ENCODE measurements at regions of chr14 and their contacts with region 1.

Region 1: DNA sequence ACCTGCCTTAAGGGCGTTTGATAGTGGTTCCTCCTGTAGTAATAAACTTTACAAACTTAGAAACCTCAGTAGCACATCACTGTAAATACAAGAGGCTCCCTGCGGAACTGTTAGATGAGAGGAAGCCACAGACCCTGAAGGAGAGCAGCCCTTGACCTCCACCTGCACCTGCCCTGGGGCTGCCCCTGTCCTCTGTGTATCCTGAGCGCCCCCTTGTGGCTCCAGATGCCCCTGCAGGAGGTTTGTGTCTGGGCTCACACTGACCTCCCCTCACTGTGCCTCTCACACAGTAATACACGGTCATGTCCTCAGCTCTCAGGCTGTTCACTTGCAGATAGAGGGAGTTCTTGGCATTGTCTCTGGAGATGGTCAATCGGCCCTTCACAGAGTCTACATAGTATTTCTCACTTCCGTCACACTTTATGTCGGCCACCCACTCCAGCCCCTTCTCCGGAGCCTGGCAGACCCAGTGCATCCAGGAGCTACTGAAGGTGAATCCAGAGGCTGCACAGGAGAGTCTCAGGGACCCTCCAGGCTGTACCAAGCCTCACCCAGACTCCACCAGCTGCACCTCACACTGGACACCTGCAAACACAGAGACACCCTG is 1059.8 kb downstream of the TMEM121 start:
- DNase-seq: peak; percentile 26 to 77 (median 65)
- ATAC-seq: peak; percentile 75
- H3K4me3 ChIP-seq: no peak overlapping the region
- H3K4me3 Mint-ChIP-seq: no peak overlapping the region
- H3K27ac ChIP-seq: no peak overlapping the region
- H3K27ac Mint-ChIP-seq: no peak overlapping the region
- H3K4me1 ChIP-seq: no peaks in the 10 kb centered on the region
- H3K4me1 Mint-ChIP-seq: peaks cover 5% of the 10 kb centered on the region
- H3K27me3 ChIP-seq: peaks cover 0 to 3% of the 10 kb centered on the region in 2 experiments
- H3K27me3 Mint-ChIP-seq: peaks cover 20% of the 10 kb centered on the region
- CTCF ChIP-seq: peak; percentile 80

Region 2: GRCh38 chr14:106605548-106606448 is 19.6 kb after region 1 on chr14:
- CTCF ChIA-PET with region 1: interaction called, 16 read pairs
- POLR2A ChIA-PET with region 1: no interaction called
- intact Hi-C with region 1: no loop called
- DNase-seq: peak; percentile 59 to 87 (median 83)
- ATAC-seq: peak; percentile 100
- H3K4me3 ChIP-seq: no peak overlapping the region
- H3K4me3 Mint-ChIP-seq: no peak overlapping the region
- H3K27ac ChIP-seq: no peak overlapping the region
- H3K27ac Mint-ChIP-seq: no peak overlapping the region
- H3K4me1 ChIP-seq: no peaks in the 10 kb centered on the region
- H3K4me1 Mint-ChIP-seq: no peaks in the 10 kb centered on the region
- H3K27me3 ChIP-seq: peaks cover 0 to 2% of the 10 kb centered on the region in 2 experiments
- H3K27me3 Mint-ChIP-seq: peaks cover 42% of the 10 kb centered on the region
- CTCF ChIP-seq: peak; percentile 76

Region 3: DNA sequence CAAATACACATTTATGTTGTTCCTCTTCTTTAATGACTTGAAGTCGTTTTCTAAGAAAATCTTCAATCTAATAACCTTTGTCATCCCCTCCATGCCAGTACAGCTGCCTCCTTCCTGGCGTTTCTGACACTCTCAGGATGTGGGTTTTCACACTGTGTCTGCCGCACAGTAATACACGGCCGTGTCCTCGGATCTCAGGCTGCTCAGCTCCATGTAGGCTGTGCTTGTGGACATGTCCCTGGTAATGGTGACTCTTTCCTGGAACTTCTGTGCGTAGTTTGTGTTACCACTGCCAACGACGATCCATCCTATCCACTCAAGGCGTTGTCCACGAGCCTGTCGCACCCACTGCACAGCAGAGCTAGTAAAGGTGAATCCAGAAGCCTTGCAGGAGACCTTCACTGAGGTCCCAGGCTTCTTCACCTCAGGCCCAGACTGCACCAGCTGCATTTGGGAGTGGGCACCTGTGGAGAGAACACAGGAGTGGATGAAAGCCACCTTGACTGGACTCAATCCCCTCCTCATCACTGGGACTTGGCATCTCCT is 36.1 kb after region 1 on chr14:
- CTCF ChIA-PET with region 1: interaction called, 3 read pairs
- POLR2A ChIA-PET with region 1: no interaction called
- intact Hi-C with region 1: loop called in 1 of 2 experiments (anchors 2 kb)
- DNase-seq: peak in 7 of 9 experiments; percentile 9 to 72 (median 59)
- ATAC-seq: peak; percentile 50
- H3K4me3 ChIP-seq: no peak overlapping the region
- H3K4me3 Mint-ChIP-seq: no peak overlapping the region
- H3K27ac ChIP-seq: no peak overlapping the region
- H3K27ac Mint-ChIP-seq: no peak overlapping the region
- H3K4me1 ChIP-seq: peaks cover 6% of the 10 kb centered on the region
- H3K4me1 Mint-ChIP-seq: peaks cover 15% of the 10 kb centered on the region
- H3K27me3 ChIP-seq: peaks cover 0 to 2% of the 10 kb centered on the region in 2 experiments
- H3K27me3 Mint-ChIP-seq: peaks cover 26% of the 10 kb centered on the region
- CTCF ChIP-seq: no peak

Measured in CD8-positive, alpha-beta T cell (primary cell).